Heart right ventricle (tissue), 16 donors: ENCODE measurements at regions of chr10 and their contacts with region 1.

Region 1: DNA sequence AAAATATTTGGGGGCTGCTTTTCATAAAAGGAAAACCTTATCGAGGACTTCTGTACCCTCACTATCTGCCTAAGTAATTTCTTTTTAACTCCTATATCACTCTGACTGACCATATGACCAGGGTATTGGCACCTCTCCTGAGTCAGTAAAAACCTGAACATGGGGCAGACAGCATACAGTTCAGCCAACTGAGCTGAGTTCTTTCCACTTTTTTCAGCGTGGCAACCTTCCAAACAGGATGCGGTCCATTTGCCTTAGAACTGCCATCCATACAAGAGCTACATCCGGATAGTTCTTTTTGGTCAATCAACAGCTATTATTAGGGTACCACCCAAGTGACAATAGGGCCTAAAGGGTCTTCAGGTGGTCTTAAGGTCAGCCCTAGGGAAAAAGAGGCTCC is 122.6 kb downstream of the MARCHF5 start:
- DNase-seq: peak in 1 of 2 donors; percentile 24
- ATAC-seq: peak in 1 of 8 donors; percentile 61
- H3K4me3 ChIP-seq: no peak overlapping the region
- H3K27ac ChIP-seq: no peak overlapping the region
- H3K4me1 ChIP-seq: no peaks in the 10 kb centered on the region
- H3K27me3 ChIP-seq: no peaks in the 10 kb centered on the region
- CTCF ChIP-seq: no peak

Region 2: GRCh38 chr10:91096274-91096673 is 1317.2 kb before region 1 on chr10:
- intact Hi-C with region 1: loop called in 1 of 10 experiments (anchors 5 kb)
- DNase-seq: no peak
- ATAC-seq: no peak
- H3K4me3 ChIP-seq: no peak overlapping the region
- H3K27ac ChIP-seq: no peak overlapping the region
- H3K4me1 ChIP-seq: peaks cover 0 to 9% (median 0%) of the 10 kb centered on the region in 9 donors
- H3K27me3 ChIP-seq: no peaks in the 10 kb centered on the region
- CTCF ChIP-seq: no peak

Region 3: GRCh38 chr10:92377962-92378361 is 35.6 kb before region 1 on chr10:
- intact Hi-C with region 1: no loop called
- DNase-seq: no peak
- ATAC-seq: no peak
- H3K4me3 ChIP-seq: no peak overlapping the region
- H3K27ac ChIP-seq: no peak overlapping the region
- H3K4me1 ChIP-seq: peaks cover 0 to 23% (median 5%) of the 10 kb centered on the region in 9 donors
- H3K27me3 ChIP-seq: no peaks in the 10 kb centered on the region
- CTCF ChIP-seq: no peak

Region 4: DNA sequence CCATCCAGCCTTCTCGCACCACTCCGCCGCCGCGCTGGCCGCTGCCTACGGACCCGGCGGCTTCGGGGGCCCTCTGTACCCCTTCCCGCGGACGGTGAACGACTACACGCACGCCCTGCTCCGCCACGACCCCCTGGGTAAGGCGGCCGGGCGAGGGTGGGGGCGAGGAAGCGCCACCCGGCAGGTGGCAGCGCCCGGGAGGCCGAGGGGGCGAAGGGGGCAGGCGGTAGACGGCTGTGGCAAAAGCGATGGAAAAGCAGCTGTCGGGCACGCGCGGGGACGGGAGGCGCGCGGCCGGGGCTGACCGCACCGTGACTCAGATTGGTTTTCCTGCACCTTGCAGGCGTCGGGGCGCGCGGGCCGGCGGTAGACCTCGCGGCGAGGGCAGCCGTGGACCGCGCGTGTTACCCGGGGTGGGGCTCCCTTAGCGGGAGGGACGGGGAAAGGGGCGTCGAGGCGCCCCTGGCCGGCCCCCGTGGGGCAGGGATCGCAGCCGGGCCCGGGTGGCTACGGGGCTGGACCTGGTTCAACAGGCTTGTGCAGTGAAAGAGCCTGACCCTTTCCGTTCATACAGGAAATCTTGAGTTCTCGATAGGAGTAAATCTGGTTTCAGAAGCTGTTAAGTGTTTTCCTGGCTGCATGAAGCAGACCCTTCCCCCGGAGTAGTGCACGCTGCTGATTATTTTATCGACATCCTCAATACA is 276.8 kb after region 1 on chr10:
- intact Hi-C with region 1: no loop called
- DNase-seq: peak; percentile 67 to 68
- ATAC-seq: peak; percentile 45 to 80 (median 68)
- H3K4me3 ChIP-seq: peak overlapping the region; percentile 60 to 78 (median 67)
- H3K27ac ChIP-seq: peak overlapping the region; percentile 75 to 95 (median 94)
- H3K4me1 ChIP-seq: peaks cover 0 to 42% (median 25%) of the 10 kb centered on the region in 9 donors
- H3K27me3 ChIP-seq: peaks cover 0 to 73% (median 58%) of the 10 kb centered on the region in 7 donors
- CTCF ChIP-seq: peak in 1 of 9 donors; percentile 3